Activated CD8-positive, alpha-beta T cell treated with anti-CD3 and anti-CD28 coated beads for 36 hours (primary cell): ENCODE measurements at regions of chr16 and their contacts with region 1.

Region 1: DNA sequence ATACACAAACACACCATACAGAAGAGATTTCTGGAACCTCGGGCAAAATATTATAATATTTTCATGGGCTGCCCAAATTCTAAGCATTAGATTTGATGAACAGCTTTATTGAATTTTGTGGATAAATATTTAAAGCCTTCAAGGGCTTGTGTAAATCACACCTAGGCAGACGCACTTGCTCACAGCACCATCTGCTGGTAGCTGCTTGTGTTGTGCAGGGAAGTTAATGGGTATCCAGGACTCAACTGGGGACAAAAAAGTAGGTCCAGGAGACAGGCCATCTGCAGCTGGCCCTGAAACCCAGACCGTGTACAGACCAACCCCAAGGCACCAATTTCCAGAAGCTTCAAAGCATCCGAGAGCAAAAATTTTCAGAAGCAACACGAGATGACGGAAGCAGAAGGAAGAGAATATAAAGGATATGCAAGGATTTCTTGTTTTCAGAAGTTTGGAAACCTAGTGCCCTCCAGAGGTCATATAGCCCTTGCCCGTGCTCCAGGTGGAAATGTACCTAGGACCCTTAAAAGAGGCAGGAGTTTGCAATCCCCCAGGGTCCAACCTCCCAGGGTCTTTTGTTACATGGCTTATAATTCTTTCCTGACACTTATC is 140.0 kb downstream of the CHD9NB start:
- DNase-seq: peak; percentile 66
- ATAC-seq: no peak
- H3K4me3 Mint-ChIP-seq: no peak overlapping the region
- H3K27ac Mint-ChIP-seq: no peak overlapping the region
- H3K4me1 Mint-ChIP-seq: no peaks in the 10 kb centered on the region
- H3K27me3 Mint-ChIP-seq: peaks cover 4% of the 10 kb centered on the region
- CTCF ChIP-seq: peak; percentile 76

Region 2: GRCh38 chr16:52874042-52874441 is 38.6 kb before region 1 on chr16:
- CTCF ChIA-PET with region 1: no interaction called
- POLR2A ChIA-PET with region 1: no interaction called
- intact Hi-C with region 1: no loop called
- DNase-seq: no peak
- ATAC-seq: no peak
- H3K4me3 Mint-ChIP-seq: no peak overlapping the region
- H3K27ac Mint-ChIP-seq: no peak overlapping the region
- H3K4me1 Mint-ChIP-seq: no peaks in the 10 kb centered on the region
- H3K27me3 Mint-ChIP-seq: peaks cover 6% of the 10 kb centered on the region
- CTCF ChIP-seq: no peak

Region 3: DNA sequence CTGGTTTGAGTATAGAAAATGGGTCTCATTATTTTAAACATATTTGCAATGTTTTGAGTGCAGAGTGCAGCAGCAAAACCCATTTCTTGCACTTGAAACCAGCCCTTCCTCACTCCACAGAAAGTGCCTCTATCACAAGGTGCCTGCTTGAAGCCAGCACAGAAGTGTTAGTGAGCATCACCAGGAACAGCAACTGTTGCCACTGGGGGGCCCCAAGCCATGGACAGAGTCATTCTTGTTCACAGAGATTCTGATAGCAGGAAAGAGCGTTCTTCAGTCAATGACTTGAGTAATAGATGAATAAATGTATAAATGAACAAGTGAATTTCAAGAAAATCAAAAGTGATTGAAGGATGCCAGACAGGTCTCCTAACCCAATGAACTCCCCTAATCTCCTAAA is 94.4 kb after region 1 on chr16:
- CTCF ChIA-PET with region 1: no interaction called
- POLR2A ChIA-PET with region 1: no interaction called
- intact Hi-C with region 1: no loop called
- DNase-seq: no peak
- ATAC-seq: no peak
- H3K4me3 Mint-ChIP-seq: no peak overlapping the region
- H3K27ac Mint-ChIP-seq: no peak overlapping the region
- H3K4me1 Mint-ChIP-seq: no peaks in the 10 kb centered on the region
- H3K27me3 Mint-ChIP-seq: peaks cover 9% of the 10 kb centered on the region
- CTCF ChIP-seq: no peak

Region 4: GRCh38 chr16:53022374-53022773 is 109.7 kb after region 1 on chr16:
- CTCF ChIA-PET with region 1: interaction called, 13 read pairs
- POLR2A ChIA-PET with region 1: no interaction called
- intact Hi-C with region 1: no loop called
- DNase-seq: peak; percentile 12
- ATAC-seq: no peak
- H3K4me3 Mint-ChIP-seq: no peak overlapping the region
- H3K27ac Mint-ChIP-seq: no peak overlapping the region
- H3K4me1 Mint-ChIP-seq: no peaks in the 10 kb centered on the region
- H3K27me3 Mint-ChIP-seq: no peaks in the 10 kb centered on the region
- CTCF ChIP-seq: peak; percentile 30